Sigmoid colon (tissue), 7 donors: ENCODE measurements at regions of chr7 and their contacts with region 1.

Region 1: DNA sequence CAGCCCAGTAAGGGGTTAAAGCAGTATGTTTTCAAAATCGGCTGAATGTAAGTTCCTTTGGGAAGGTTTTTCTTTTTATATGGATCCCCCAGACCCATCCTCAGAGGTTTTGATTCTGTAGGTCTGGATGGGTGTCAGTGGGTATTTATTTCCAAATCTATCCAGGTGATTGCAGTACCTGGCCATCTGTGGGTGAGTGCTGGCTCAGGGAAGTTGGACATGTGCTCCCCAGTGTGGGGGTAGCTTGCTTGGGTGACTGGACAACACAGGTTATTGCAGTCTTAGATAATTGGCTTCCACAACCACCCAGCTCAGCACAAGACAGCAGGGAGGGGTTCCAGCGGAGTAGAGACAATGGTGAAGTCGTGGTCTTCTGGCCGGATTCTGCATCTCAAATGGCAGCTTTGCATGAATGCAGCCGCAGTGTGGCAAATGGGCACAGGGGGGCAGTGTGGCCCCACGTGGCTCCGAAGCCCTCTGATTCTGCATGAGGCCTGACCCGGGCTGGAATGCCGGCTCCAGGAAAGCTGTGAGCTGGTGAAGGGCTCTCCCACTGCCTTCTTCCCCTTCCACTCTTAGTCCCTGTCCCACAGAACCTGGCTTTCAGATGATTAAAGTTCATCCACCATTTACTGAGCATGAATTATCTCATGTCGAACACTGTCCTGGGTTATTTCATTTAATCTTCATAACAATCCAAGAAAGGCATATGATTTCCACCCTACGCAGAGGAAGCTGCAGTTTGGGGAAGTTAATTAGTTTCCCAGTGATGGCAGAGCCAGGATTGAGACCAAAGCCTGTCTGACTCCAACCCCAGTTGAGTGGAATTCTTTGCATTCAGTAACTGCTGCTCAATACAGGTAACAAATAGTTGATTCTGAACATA is 64.5 kb upstream of the SYPL1 start:
- DNase-seq: peak; percentile 90
- H3K4me3 ChIP-seq: no peak overlapping the region
- H3K27ac ChIP-seq: no peak overlapping the region
- H3K4me1 ChIP-seq: peaks cover 0 to 9% (median 5%) of the 10 kb centered on the region in 4 donors
- H3K27me3 ChIP-seq: no peaks in the 10 kb centered on the region
- CTCF ChIP-seq: peak; percentile 90 to 95 (median 92)
- EP300 ChIP-seq: no peak
- POLR2A ChIP-seq: no peak

Region 2: DNA sequence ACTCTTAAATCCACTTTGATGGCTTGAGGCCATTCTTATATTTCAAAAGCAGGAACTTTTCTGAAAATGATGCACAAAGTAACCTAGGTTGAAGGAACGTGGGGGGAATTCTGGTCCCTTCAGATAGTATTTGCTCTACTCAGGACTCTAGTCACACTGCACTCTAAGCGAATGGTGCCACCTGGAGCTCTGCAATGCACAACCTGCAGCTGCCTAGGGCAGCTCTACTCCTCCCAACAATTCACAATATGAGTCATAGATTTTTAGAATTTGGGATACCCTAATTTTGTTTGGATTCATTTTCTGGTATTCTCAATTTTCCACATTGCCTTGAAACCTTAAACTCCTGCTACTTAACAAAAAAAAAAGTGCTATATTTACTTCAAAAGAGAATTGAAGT is 81.9 kb before region 1 on chr7:
- intact Hi-C with region 1: no loop called
- DNase-seq: no peak
- H3K4me3 ChIP-seq: no peak overlapping the region
- H3K27ac ChIP-seq: no peak overlapping the region
- H3K4me1 ChIP-seq: peaks cover 0 to 19% (median 9%) of the 10 kb centered on the region in 4 donors
- H3K27me3 ChIP-seq: no peaks in the 10 kb centered on the region
- CTCF ChIP-seq: no peak
- EP300 ChIP-seq: no peak
- POLR2A ChIP-seq: no peak

Region 3: DNA sequence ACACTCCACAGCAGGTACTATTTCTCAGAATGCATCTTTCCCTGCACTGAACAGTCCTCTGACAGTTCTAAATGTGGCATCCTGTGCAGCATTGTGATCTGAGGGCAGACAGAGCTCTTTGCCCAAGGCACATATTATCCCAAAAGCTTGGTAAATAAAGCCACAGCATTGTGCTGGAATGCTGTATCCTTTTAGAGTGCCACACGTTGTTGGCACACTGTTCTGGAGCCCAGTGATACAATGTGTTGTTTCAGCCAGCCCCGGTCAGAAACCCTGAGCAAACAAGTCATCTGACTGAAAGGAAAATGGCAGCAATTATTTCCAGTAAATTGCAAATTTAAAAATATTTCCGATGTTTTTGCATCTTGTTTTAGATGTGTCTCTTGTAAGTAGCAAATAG is 62.7 kb after region 1 on chr7:
- intact Hi-C with region 1: no loop called
- DNase-seq: no peak
- H3K4me3 ChIP-seq: no peak overlapping the region
- H3K27ac ChIP-seq: peak overlapping the region; percentile 43 to 68 (median 61)
- H3K4me1 ChIP-seq: peaks cover 0 to 26% (median 14%) of the 10 kb centered on the region in 4 donors
- H3K27me3 ChIP-seq: no peaks in the 10 kb centered on the region
- CTCF ChIP-seq: no peak
- EP300 ChIP-seq: no peak
- POLR2A ChIP-seq: no peak

Region 4: DNA sequence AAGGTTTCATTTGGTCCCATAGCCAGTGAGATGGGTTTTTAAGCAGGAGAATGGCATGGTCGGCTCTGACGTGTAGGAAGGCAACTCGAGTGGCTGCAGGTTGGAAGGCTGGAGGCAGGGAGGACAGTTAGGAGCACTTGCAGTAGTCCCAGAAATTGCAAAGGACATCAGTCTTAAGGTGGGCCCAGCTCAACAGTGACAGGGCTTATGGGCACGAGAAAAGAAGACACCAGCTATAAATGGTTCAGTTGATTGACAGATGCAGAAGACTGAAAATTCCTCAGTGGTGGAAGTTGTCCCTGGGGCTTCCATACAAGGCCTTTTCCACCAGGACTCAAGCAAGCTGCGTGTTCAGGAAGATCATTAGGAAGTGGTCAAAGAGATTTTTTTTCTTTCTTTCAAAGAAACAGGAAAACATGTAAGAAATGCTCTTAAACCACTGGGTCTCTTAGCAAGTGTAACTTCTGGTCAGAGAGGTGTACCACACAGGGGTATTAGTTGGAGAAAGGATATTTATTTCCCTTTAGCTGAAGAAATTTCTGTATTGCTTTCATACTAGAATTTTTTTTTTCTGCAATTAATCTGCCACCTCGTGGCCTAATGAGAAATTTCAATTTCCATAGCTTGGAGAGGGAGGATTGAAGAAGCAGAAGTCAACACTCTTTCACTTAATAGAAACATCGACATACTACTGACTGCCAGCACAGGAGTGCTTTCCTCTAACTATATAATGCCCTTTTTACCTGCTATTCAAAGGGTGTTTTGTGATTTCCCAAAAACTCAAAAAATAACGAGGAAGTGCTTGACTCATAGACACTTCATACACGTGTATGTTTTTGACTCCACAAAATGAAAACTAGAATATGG is 285.6 kb after region 1 on chr7:
- intact Hi-C with region 1: loop called (anchors 1 kb)
- DNase-seq: no peak
- H3K4me3 ChIP-seq: no peak overlapping the region
- H3K27ac ChIP-seq: no peak overlapping the region
- H3K4me1 ChIP-seq: peaks cover 0 to 10% (median 3%) of the 10 kb centered on the region in 4 donors
- H3K27me3 ChIP-seq: no peaks in the 10 kb centered on the region
- CTCF ChIP-seq: peak in 3 of 4 experiments; percentile 57 to 72 (median 70)
- EP300 ChIP-seq: no peak
- POLR2A ChIP-seq: no peak